HAP-1 (cell line): ENCODE measurements at regions of chr17 and their contacts with region 1.

Region 1: DNA sequence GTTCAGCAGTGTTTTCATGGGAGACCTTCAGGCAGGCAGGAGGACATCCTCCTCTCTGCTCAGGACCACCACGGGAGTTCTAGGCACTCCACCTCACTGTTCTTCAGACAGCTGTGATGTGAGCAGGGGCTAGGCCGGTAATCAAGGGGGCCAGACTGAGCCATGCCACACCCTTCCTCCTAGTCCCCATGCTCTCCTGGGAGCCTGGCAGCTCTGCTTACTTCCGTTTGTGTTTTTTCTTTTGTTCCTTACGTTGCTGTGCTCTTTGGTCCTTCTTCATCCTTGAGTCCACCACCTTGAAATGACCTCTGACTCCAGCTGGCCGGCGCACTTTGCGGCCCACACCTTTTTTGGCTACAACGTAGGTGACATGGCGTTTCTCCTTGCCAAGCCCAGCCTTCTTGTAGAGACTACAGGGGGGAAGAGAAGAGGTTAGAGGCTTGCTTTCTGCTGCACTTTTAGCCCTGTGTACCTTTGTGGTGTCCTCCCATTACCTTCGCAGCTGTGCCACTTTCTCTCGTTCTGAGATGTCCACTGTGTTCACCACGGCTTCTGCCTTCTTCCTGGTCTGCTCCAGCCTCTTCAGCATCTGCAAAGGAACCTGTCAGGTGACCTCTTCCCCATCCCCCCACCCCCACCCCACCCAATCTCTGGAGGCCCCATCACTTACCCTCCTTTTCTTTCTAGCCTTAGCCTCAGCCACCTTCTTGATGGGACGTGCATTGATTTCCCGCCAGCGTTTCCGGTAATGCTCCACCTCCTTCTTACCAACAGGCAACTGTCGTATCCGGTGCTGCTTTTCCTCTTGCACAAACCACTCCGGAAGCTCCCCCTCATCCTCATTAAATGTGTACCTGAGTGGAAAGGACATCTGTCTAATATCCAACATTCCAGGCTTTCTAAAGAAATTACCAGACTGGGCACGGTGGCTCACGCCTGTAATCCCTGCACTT is 7.4 kb upstream of the PSMC5 start:
- DNase-seq: no peak
- H3K4me3 ChIP-seq: no peak overlapping the region
- H3K4me1 ChIP-seq: no peaks in the 10 kb centered on the region
- H3K27me3 ChIP-seq: no peaks in the 10 kb centered on the region

Region 2: DNA sequence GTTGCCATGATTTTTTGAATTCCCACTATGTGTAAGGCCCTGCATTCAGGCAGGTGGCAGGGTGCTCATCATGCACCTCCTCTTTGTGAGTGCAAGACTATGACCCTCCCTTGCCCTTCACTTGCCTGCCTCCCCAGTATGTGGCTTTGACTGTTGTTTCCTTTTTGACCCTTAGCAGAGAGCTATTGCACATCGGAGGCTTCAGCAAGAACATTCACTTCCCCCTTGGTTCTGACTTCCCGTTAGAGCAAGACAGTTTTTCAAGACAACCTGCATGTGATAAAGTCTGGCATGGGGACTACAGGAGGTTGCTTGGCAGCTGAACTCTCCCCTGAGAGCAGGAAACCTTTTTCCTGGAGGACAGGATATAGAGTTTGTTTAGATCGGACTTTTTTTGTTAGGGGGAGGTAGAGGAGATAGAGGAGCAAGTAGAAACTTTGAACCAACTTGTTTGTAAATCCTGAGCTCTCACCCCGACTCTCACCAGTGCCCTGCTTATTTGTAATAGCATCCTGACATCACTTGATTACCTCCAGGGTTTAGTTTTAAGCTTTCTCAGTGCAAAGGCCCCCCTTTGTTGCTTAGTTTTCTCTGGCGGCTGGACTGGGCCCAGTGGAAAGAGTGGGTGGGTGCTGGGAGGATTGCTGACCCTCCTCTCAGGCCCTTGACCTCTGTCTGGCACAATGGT is 154.2 kb before region 1 on chr17:
- in situ Hi-C with region 1: no loop called
- DNase-seq: no peak
- H3K4me3 ChIP-seq: no peak overlapping the region
- H3K4me1 ChIP-seq: no peaks in the 10 kb centered on the region
- H3K27me3 ChIP-seq: no peaks in the 10 kb centered on the region

Region 3: GRCh38 chr17:63773381-63774140 is 46.3 kb before region 1 on chr17 and contains the start of gene CCDC47:
- in situ Hi-C with region 1: no loop called
- DNase-seq: peak; percentile 98 to 99
- H3K4me3 ChIP-seq: peak within 1 kb of the TSS; percentile 76
- H3K4me1 ChIP-seq: peaks cover 16% of the 10 kb centered on the region
- H3K27me3 ChIP-seq: no peaks in the 10 kb centered on the region

Region 4: DNA sequence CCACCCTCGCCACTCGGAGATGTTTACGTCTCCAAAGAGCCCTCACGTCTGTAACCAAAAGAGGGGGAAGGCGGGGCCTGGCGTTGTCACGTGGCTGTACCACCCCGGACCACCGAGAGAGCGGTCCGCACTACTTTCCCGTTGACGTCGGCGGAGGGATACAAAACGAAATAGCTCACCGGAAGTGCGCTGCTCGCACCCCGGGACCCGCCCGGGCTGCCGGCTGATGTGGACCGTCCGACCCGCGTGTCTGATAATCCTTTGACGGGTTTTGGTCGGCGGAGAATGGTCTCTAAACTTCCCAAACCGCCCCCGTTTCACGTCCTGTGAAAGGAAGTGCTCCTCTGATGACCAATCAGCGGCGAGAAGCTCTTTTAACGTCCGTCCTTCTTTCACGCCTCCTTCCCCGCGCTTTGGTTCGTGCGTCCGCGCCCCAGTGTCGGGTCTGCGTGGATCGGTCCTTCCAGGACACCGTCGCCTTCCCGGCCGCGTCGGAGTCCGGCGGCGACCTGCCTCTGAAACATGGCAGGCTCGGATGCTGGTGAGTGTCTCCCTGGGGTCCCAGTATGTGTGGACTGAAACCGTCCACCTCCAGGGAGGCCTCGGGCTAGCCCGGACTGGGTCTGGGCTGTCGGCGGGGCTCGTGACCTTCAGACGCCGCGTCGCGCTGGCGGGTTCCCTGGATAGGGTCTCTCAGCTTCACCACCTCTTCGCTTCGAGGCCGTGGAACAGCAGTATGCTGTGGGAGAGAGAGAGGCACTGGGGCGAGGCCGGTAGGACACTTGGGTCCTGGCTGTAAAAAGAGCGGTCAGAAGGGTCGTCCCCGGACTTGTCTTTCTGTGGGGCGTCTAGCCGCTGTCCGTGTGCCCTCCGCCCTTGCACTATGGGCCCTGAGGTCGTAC is 687.0 kb after region 1 on chr17 and contains the start of gene CEP95:
- in situ Hi-C with region 1: loop called (anchors 25 kb)
- DNase-seq: peak; percentile 94 to 98
- H3K4me3 ChIP-seq: peak within 1 kb of the TSS; percentile 94
- H3K4me1 ChIP-seq: peaks cover 8% of the 10 kb centered on the region
- H3K27me3 ChIP-seq: no peaks in the 10 kb centered on the region